GM10248 (cell line): ENCODE measurements at regions of chr15 and their contacts with region 1.

Region 1: DNA sequence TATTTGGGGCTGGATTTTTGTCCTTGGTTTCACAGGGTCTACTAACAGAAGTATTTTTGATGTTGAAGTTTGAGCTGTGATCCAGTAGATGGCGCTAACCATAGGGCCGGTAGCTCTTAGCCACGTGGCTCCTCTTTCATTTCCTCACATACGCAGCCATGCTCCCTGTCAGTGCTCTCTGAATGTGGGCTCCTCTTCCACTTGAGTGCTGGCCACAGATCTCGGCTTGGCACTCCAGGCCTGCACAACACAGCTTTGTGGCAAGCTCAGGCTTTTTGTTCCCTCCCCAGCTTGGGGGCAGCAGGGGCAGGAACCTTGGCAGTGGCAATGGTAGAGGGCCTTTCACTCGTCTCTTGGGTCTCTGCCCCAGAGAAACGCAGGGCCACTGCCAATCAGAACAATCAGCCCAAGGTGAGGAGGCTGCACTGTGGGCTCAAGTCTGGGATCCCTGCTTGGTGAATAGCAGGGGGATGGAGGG is 18.6 kb upstream of the DNAAF4 start:
- DNase-seq: peak; percentile 42
- CTCF ChIP-seq: no peak

Region 2: GRCh38 chr15:55496716-55497115 is 29.9 kb before region 1 on chr15:
- CTCF ChIA-PET with region 1: interaction called, 11 read pairs
- POLR2A ChIA-PET with region 1: no interaction called
- DNase-seq: no peak
- CTCF ChIP-seq: no peak

Region 3: GRCh38 chr15:55514414-55514850 is 12.2 kb before region 1 on chr15:
- CTCF ChIA-PET with region 1: interaction called, 32 read pairs
- POLR2A ChIA-PET with region 1: no interaction called
- DNase-seq: no peak
- CTCF ChIP-seq: no peak

Region 4: DNA sequence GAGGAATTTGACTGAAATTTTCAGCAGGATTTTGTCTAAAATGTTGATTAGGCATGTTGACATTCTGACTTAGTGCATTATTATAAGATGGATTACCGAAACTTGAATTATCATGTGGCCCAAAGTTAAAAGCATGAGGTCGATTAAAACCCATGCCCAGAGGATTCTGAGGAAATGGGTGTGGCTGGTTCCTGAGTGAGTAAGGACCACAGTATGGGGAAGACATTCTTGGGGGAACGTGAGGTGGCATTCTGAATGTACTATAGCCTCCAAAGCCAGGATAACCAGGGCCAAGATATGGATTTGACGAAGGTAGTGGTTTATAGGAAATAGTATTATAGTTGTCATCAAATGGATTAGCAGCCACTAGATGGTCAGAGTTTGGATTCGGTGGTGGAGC is 20.1 kb after region 1 on chr15:
- CTCF ChIA-PET with region 1: interaction called, 14 read pairs
- POLR2A ChIA-PET with region 1: no interaction called
- DNase-seq: no peak
- CTCF ChIP-seq: no peak

Region 5: GRCh38 chr15:55637086-55637485 is 110.5 kb after region 1 on chr15:
- CTCF ChIA-PET with region 1: interaction called, 12 read pairs
- POLR2A ChIA-PET with region 1: no interaction called
- DNase-seq: no peak
- CTCF ChIP-seq: no peak